ENCODE measurements at regions of chr4 and their contacts with region 1.

Region 1: GRCh38 chr4:23889814-23890341 is at the start of gene PPARGC1A:
- DNase-seq: peak; percentile 50
- ATAC-seq: peak; percentile 33; the same call in 1 of the 2 replicates
- H3K4me3 ChIP-seq: peak within 1 kb of the TSS; percentile 35
- H3K27ac ChIP-seq: peak within 1 kb of the TSS; percentile 1
- H3K4me1 ChIP-seq: peaks cover 4% of the 10 kb centered on the region
- H3K27me3 ChIP-seq: no peaks in the 10 kb centered on the region
- CTCF ChIP-seq: no peak
- POLR2A ChIP-seq: no peak
- RAD21 ChIP-seq: no peak
- total RNA-seq, gene PPARGC1A: under 0.01 TPM in 2 replicates

Region 2: DNA sequence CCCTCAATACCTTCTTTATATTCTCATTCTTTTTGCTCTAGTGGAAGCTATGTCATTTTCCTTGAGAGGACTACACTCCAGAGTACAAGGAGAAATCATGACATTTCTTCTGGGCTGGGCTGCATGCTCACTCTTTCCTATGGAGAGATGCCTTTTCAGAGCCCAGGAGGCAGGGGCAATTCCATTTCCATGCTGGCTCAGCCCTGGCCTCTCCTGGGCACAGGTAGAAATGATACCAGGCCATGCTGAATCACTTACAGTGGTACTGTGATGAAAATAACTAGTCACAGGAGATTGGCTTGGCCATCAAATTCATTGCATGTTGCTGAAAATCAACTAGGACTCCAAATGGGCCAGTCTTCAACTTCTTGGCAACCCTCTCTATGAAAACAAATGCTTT is 34.0 kb after region 1 on chr4:
- CTCF ChIA-PET with region 1: no interaction called
- POLR2A ChIA-PET with region 1: interaction called, 28 read pairs
- dilution Hi-C with region 1: no loop called
- in situ Hi-C with region 1: no loop called
- intact Hi-C with region 1: no loop called
- DNase-seq: no peak
- ATAC-seq: no peak
- H3K4me3 ChIP-seq: no peak overlapping the region
- H3K27ac ChIP-seq: no peak overlapping the region
- H3K4me1 ChIP-seq: no peaks in the 10 kb centered on the region
- H3K27me3 ChIP-seq: no peaks in the 10 kb centered on the region; the same call in 1 of the 2 replicates
- CTCF ChIP-seq: no peak
- POLR2A ChIP-seq: no peak
- RAD21 ChIP-seq: no peak